AG04449 (cell line): ENCODE measurements at regions of chr1 and their contacts with region 1.

Region 1: GRCh38 chr1:209565759-209566678 is 17.5 kb upstream of the CAMK1G start:
- DNase-seq: peak; percentile 38
- H3K4me3 ChIP-seq: no peak overlapping the region
- CTCF ChIP-seq: peak; percentile 80

Region 2: GRCh38 chr1:209062863-209063262 is 503.2 kb before region 1 on chr1:
- CTCF ChIA-PET with region 1: no interaction called
- POLR2A ChIA-PET with region 1: no interaction called
- DNase-seq: no peak
- H3K4me3 ChIP-seq: no peak overlapping the region
- CTCF ChIP-seq: no peak

Region 3: DNA sequence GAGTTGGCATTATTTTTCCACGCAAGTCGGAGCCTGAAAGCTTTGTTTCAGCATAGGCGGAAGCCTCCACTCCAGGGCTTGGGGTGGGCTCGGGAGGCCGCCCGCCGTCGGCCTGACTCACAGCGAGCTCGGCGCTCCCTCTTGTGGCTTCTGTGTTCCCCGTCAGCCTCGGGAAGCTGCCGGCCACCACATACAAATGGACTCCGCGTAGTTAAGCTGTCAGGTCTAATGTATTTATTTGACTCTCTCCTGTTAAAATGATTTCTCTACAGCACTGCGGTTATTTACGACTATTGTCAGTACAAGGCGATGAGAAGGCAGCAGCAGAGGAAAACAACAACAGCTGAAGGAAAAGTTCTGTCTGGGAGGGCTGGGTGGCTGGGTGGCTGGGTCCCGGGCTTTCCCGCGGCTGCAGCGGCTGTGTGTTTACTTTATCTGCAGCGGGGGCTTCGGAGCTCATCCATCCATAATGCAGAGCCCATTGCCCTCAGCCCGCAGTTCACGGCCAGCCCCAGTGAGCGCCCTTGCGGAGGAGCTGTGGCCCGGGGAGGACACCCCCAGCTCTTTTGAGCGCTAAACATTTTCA is 358.2 kb before region 1 on chr1:
- CTCF ChIA-PET with region 1: interaction called, 151 read pairs
- POLR2A ChIA-PET with region 1: no interaction called
- DNase-seq: peak; percentile 4
- H3K4me3 ChIP-seq: peak overlapping the region; percentile 48
- CTCF ChIP-seq: peak; percentile 95

Region 4: DNA sequence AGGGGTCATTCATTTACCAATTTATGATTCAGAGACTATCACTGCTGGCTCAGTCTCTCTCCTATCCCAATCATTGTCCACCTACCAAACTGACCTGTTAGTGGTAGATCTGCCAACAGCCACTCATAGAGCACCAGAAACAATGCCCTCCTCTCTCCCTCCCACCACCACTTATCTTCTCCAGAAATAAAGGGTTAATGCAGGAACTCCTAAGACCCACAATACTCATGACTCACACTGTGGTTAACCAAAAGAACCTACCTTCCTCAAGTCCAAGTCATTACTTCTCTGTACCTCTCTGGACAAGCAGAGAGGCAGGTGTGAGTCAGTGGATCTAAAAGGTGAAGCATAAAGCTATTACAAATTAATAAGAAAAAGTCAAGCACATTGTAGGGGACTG is 23.4 kb before region 1 on chr1:
- CTCF ChIA-PET with region 1: interaction called, 15 read pairs
- POLR2A ChIA-PET with region 1: no interaction called
- DNase-seq: no peak
- H3K4me3 ChIP-seq: no peak overlapping the region
- CTCF ChIP-seq: no peak

Region 5: GRCh38 chr1:209576798-209577197 is 10.8 kb after region 1 on chr1:
- CTCF ChIA-PET with region 1: interaction called, 318 read pairs
- POLR2A ChIA-PET with region 1: no interaction called
- DNase-seq: no peak
- H3K4me3 ChIP-seq: no peak overlapping the region
- CTCF ChIP-seq: peak; percentile 96

Region 6: DNA sequence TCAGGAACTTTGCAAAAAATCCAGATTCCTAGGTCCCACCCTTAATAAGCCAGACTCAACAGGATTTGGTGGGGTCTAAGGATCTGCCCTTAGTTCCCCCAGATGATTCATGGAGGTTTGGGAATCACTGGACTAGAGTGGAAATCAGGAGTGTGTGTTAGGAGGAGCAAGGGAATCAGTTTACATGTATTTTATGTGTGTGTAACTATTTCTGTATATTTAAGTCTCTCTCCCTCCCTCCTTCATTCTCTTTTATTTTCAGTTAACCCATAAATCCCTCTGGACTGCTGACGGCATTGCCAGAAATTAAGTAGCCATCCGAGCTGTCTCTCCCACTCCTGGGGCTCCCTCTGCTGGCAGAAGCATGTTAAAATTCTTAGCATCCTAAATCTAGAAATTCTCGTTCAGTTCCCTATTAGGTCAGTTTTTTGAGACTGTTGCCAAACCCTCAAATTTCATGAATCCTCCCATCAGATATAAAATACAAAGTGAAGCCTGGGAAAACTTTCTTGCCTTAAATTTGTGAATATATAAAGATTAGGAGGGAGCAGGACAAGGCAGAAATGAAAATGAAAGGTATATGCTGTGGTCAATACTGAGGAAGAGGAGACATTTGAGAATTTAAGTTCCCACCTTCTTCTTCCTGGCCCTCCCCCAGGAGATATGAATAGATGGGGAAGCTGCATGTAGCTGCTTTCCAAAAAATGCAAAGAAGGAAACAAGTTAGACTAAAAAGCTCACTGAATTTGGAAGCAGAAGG is 126.9 kb after region 1 on chr1:
- CTCF ChIA-PET with region 1: interaction called, 314 read pairs
- POLR2A ChIA-PET with region 1: no interaction called
- DNase-seq: peak; percentile 50
- H3K4me3 ChIP-seq: no peak overlapping the region
- CTCF ChIP-seq: peak; percentile 69